Activated T-helper 2 cell treated with anti-CD3 and anti-CD28 coated beads, Interferon-gamma antibody, Interleukin-2, Interleukin-4, amounts not matched to agents 10 μg/mL and 5 μg/mL and 100 μg/mL, durations not matched to agents 14 hours and 24 hours and 36 hours (primary cell): ENCODE measurements at regions of chr10 and their contacts with region 1.

Region 1: GRCh38 chr10:92592761-92593618 is at the start of gene KIF11:
- DNase-seq: peak; percentile 96
- H3K4me3 Mint-ChIP-seq: peak within 1 kb of the TSS; percentile 91
- H3K27ac Mint-ChIP-seq: peak within 1 kb of the TSS; percentile 100
- H3K4me1 Mint-ChIP-seq: peaks cover 50% of the 10 kb centered on the region
- H3K27me3 Mint-ChIP-seq: no peaks in the 10 kb centered on the region
- total RNA-seq, gene KIF11: 41.4 and 44.9 TPM in 2 replicates

Region 2: DNA sequence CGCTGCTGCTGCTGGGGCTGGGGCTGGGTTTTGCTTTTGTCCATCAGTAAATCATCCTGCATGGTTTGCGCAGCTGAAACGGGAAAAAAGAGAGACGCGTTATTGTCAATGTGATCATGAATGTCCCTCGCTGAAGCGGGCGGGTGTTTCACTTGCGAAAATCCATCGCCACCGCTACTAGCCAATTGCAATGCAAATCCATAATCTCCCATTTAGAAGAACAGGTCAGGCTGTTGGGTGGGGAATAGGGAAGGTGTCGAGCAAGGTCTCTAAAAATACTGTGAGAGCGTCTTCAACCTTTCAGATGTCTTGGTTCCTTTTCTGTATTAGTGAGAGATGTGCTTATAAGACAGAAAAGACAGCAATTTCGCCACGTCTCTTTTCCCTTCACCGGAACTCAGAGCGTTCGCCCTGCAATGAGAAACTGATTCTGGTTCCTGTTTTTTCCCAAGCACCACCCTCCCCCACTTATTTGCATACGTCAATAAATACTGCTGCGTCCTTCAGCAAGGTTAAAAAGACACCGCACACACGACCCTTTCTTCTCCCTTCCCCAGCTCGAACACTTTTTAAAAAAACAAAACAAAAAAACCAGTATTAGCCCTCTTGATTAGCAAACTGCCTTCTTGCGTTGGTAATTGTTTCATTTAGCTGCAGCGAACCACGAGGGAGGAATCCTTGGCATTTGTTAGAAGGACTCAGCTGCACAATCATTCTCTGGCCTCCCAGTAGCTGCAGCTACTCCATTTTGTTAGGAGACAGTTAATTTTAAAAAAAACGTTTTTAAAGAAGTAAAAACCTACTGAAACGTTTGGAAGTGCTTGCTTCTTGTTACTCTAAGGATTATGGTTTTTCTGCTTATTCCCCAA is 352.5 kb before region 1 on chr10:
- intact Hi-C with region 1: loop called (anchors 5 kb)
- DNase-seq: peak; percentile 18
- H3K4me3 Mint-ChIP-seq: peak overlapping the region; percentile 78
- H3K27ac Mint-ChIP-seq: peak overlapping the region; percentile 1
- H3K4me1 Mint-ChIP-seq: peaks cover 39% of the 10 kb centered on the region
- H3K27me3 Mint-ChIP-seq: peaks cover 46% of the 10 kb centered on the region

Region 3: DNA sequence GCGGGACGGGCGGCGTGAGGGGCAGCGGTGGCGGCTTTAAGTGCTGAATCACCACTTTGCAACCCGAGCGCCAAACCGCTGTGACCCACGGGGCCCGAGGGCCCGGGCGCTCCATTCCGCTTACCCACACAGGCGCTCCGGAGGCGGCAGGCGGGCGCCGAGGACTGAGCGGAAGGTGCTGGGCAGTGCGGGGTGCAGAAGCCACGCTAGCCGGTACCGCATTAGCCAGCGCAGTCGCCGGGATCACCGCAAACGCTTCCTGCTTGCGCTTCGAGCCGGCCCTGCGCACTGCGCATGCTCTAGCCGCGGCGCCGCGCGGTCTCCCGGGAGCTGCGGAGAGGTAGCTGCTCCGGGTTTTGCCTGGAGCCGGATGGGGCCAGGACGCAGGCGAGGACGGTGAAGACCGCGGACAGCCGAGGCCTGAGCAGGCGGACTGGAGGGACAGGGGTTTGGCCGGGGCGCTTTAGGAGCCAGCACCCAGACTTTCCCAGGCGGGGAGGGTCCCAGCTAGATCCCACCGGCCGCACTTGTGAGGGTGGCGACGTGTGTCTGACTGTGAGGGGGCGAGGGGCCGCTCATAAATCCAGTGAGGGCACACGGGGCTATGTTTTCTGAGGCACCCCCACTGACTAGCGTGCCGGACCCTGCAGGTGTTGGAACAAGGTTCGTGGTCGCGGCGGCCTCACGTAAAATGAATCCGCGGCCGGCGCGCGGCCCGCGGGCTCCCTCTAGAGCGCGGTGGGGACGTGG is 19.0 kb before region 1 on chr10 and contains the start of gene IDE:
- intact Hi-C with region 1: loop called (anchors 1 kb)
- DNase-seq: peak; percentile 83
- H3K4me3 Mint-ChIP-seq: peak within 1 kb of the TSS; percentile 68
- H3K27ac Mint-ChIP-seq: peak within 1 kb of the TSS; percentile 87
- H3K4me1 Mint-ChIP-seq: peaks cover 29% of the 10 kb centered on the region
- H3K27me3 Mint-ChIP-seq: peaks cover 2% of the 10 kb centered on the region
- total RNA-seq, gene IDE: 45.3 and 47.2 TPM in 2 replicates

Region 4: DNA sequence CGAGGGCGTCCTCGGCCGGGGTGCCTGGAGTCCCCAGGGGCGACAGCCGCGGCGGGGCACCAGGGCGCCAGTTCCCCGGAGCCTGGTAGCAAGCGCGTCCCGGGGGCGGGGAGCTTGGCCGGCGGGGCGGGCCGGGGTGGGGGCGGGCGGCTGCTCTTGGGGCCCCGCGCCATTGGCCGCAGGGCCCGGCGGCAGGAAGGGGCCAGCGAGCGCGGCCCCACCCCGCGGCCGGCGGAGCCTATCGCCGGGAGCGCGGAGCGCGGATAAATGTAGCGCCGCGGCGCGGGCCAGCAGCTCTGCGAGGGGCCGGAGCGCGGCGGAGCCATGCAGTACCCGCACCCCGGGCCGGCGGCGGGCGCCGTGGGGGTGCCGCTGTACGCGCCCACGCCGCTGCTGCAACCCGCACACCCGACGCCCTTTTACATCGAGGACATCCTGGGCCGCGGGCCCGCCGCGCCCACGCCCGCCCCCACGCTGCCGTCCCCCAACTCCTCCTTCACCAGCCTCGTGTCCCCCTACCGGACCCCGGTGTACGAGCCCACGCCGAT is 96.7 kb after region 1 on chr10 and contains the start of gene HHEX:
- intact Hi-C with region 1: loop called (anchors 5 kb)
- DNase-seq: no peak
- H3K4me3 Mint-ChIP-seq: peak within 1 kb of the TSS; percentile 62
- H3K27ac Mint-ChIP-seq: no peak within 1 kb of the TSS
- H3K4me1 Mint-ChIP-seq: peaks cover 21% of the 10 kb centered on the region
- H3K27me3 Mint-ChIP-seq: peaks cover 72% of the 10 kb centered on the region
- total RNA-seq, gene HHEX: 0.32 and 0.46 TPM in 2 replicates

Region 5: DNA sequence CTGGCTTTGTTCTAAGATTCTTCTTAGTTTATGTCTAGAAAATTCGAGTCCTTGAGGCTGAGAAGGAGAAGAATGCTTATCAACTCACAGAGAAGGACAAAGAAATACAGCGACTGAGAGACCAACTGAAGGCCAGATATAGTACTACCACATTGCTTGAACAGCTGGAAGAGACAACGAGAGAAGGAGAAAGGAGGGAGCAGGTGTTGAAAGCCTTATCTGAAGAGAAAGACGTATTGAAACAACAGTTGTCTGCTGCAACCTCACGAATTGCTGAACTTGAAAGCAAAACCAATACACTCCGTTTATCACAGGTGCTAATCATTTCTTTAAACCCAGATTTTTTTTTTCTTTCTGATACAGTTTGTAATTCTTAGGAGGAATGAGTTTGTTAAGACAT is 910.1 kb after region 1 on chr10:
- intact Hi-C with region 1: loop called (anchors 10 kb)
- DNase-seq: no peak
- H3K4me3 Mint-ChIP-seq: peak overlapping the region; percentile 66
- H3K27ac Mint-ChIP-seq: peak overlapping the region; percentile 87
- H3K4me1 Mint-ChIP-seq: peaks cover 74% of the 10 kb centered on the region
- H3K27me3 Mint-ChIP-seq: no peaks in the 10 kb centered on the region